ENCODE measurements at regions of chr3 and their contacts with region 1.

Region 1: GRCh38 chr3:101809178-101810021 is 30.4 kb downstream of the NXPE3 start:
- DNase-seq: no peak
- ATAC-seq: peak; percentile 64
- H3K4me3 ChIP-seq: no peak overlapping the region
- H3K27ac ChIP-seq: no peak overlapping the region
- H3K4me1 ChIP-seq: peaks cover 15% of the 10 kb centered on the region
- H3K27me3 ChIP-seq: no peaks in the 10 kb centered on the region
- CTCF ChIP-seq: peak; percentile 56 to 84 (median 65); a peak in 5 of 6 replicates
- EP300 ChIP-seq: no peak
- POLR2A ChIP-seq: no peak
- RAD21 ChIP-seq: peak; percentile 82

Region 2: DNA sequence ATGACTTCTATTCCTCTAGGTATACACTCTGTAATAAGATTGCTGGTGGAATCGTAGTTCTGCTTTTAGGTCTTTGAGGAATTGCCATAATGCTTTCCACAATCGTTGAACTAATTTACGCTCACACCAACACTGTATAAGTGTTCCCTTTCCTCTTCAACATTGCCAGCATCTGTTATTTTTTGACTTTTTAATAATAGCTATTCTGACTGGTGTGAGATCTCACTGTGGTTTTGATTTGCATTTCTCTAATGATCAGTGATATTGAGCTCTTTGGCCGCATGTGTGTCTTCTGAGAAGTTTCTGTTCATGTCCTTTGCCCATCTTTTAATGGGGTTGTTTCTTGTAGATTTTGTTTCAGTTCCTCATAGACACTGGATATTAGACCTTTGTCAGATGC is 17.6 kb before region 1 on chr3:
- CTCF ChIA-PET with region 1: interaction called, 16 read pairs
- POLR2A ChIA-PET with region 1: no interaction called
- RAD21 ChIA-PET with region 1: interaction called, 7 read pairs
- SMC1A ChIA-PET with region 1: interaction called, 11 read pairs
- in situ Hi-C with region 1: no loop called
- intact Hi-C with region 1: no loop called
- DNase-seq: peak; percentile 91
- ATAC-seq: peak; percentile 99
- H3K4me3 ChIP-seq: no peak overlapping the region
- H3K27ac ChIP-seq: peak overlapping the region; percentile 53
- H3K4me1 ChIP-seq: peaks cover 5% of the 10 kb centered on the region
- H3K27me3 ChIP-seq: no peaks in the 10 kb centered on the region
- CTCF ChIP-seq: no peak
- EP300 ChIP-seq: peak; percentile 74 to 85; a peak in 2 of 4 replicates
- POLR2A ChIP-seq: no peak
- RAD21 ChIP-seq: no peak

Region 3: GRCh38 chr3:101827211-101828174 is 18.1 kb after region 1 on chr3:
- CTCF ChIA-PET with region 1: interaction called, 40 read pairs
- POLR2A ChIA-PET with region 1: interaction called, 5 read pairs
- RAD21 ChIA-PET with region 1: interaction called, 21 read pairs
- SMC1A ChIA-PET with region 1: interaction called, 19 read pairs
- in situ Hi-C with region 1: no loop called
- intact Hi-C with region 1: no loop called
- DNase-seq: peak; percentile 93
- ATAC-seq: peak; percentile 83
- H3K4me3 ChIP-seq: peak overlapping the region; percentile 78
- H3K27ac ChIP-seq: peak overlapping the region; percentile 92
- H3K4me1 ChIP-seq: peaks cover 11% of the 10 kb centered on the region
- H3K27me3 ChIP-seq: no peaks in the 10 kb centered on the region
- CTCF ChIP-seq: no peak
- EP300 ChIP-seq: peak; percentile 36 to 84
- POLR2A ChIP-seq: peak; percentile 92
- RAD21 ChIP-seq: peak; percentile 38; the same call in 1 of the 2 replicates

Region 4: GRCh38 chr3:101861212-101861788 is 51.9 kb after region 1 on chr3:
- CTCF ChIA-PET with region 1: interaction called, 5 read pairs
- POLR2A ChIA-PET with region 1: no interaction called
- RAD21 ChIA-PET with region 1: interaction called, 7 read pairs
- SMC1A ChIA-PET with region 1: interaction called, 72 read pairs
- in situ Hi-C with region 1: no loop called
- intact Hi-C with region 1: no loop called
- DNase-seq: no peak
- ATAC-seq: peak; percentile 32
- H3K4me3 ChIP-seq: no peak overlapping the region
- H3K27ac ChIP-seq: no peak overlapping the region
- H3K4me1 ChIP-seq: peaks cover 9% of the 10 kb centered on the region
- H3K27me3 ChIP-seq: no peaks in the 10 kb centered on the region
- CTCF ChIP-seq: no peak
- EP300 ChIP-seq: no peak
- POLR2A ChIP-seq: no peak
- RAD21 ChIP-seq: no peak

Region 5: DNA sequence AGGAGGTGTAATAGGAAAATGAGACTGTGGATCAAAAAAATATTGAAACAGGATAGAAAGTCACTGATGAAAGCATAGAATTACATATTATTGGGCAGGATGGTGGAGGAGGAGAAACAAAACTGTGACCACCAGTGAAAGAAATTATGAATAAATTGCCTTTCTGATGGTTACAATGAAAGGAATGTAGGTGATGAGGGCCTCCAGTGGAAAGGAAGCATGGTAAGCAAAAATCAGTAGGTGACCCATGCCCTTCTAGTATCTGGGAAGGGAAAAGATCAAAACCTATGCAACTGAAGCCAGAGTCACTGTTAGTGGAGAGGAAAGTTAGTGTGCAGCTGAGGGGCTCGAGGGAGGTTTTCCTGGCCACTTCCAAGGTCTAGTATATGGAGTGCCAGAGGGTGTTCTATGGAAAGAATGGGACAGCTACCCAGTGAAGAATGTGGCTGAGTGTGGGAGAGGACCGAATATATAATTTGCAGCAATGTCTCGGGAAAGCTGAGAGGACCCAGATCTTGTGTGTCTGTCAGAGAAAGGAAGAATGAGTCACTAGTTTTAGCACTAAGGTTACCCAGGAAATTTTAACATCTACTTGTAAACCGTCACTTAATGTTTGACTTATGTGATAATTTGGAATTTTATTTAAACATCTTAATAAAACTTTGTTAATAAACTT is 186.1 kb after region 1 on chr3:
- CTCF ChIA-PET with region 1: interaction called, 10 read pairs
- POLR2A ChIA-PET with region 1: no interaction called
- RAD21 ChIA-PET with region 1: interaction called, 6 read pairs
- SMC1A ChIA-PET with region 1: interaction called, 10 read pairs
- in situ Hi-C with region 1: no loop called
- intact Hi-C with region 1: no loop called
- DNase-seq: no peak
- ATAC-seq: peak; percentile 26; the same call in 1 of the 3 replicates
- H3K4me3 ChIP-seq: no peak overlapping the region
- H3K27ac ChIP-seq: peak overlapping the region; percentile 22; the same call in 1 of the 2 replicates
- H3K4me1 ChIP-seq: peaks cover 29% of the 10 kb centered on the region
- H3K27me3 ChIP-seq: no peaks in the 10 kb centered on the region
- CTCF ChIP-seq: no peak
- EP300 ChIP-seq: no peak
- POLR2A ChIP-seq: no peak
- RAD21 ChIP-seq: no peak

Region 6: GRCh38 chr3:102536456-102536855 is 727.1 kb after region 1 on chr3:
- CTCF ChIA-PET with region 1: interaction called, 20 read pairs
- POLR2A ChIA-PET with region 1: no interaction called
- RAD21 ChIA-PET with region 1: interaction called, 16 read pairs
- SMC1A ChIA-PET with region 1: interaction called, 15 read pairs
- in situ Hi-C with region 1: loop called (anchors 5 kb)
- intact Hi-C with region 1: loop called (anchors 2 kb)
- DNase-seq: no peak
- ATAC-seq: peak; percentile 64
- H3K4me3 ChIP-seq: no peak overlapping the region
- H3K27ac ChIP-seq: no peak overlapping the region
- H3K4me1 ChIP-seq: no peaks in the 10 kb centered on the region
- H3K27me3 ChIP-seq: peaks cover 0 to 4% of the 10 kb centered on the region in 2 experiments; a peak in 1 of 4 replicates
- CTCF ChIP-seq: peak; percentile 34 to 56 (median 56); a peak in 5 of 6 replicates
- EP300 ChIP-seq: no peak
- POLR2A ChIP-seq: no peak
- RAD21 ChIP-seq: peak; percentile 70

Measured in GM12878 (cell line).